Esophagus muscularis mucosa (tissue), 4 donors: ENCODE measurements at regions of chr7 and their contacts with region 1.

Region 1: DNA sequence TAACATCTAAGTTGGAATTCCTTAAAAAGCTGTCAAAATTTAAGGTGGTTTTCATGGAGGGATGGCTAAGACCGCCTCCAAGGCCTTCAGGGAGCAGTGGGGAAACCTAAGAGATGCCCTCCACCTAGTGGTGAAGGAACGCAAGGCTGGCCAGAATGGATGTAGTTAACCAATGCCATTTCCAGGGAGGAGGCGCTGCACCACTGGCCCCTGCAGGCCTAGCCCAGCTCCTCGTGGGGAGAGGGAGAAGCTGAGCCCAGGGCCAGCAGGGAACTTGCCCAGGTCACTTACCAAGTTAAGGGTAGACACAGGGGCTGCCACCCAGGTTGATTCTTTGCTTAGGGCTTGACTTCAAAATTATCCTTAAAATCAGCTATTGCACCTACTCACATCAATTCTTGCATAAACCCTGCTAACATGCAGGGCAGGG is 32.0 kb downstream of the FIGNL1 start:
- DNase-seq: no peak
- H3K4me3 ChIP-seq: no peak overlapping the region
- H3K27ac ChIP-seq: no peak overlapping the region
- H3K4me1 ChIP-seq: no peaks in the 10 kb centered on the region
- H3K27me3 ChIP-seq: no peaks in the 10 kb centered on the region
- CTCF ChIP-seq: peak; percentile 55 to 68 (median 58)
- EP300 ChIP-seq: no peak
- POLR2A ChIP-seq: no peak

Region 2: GRCh38 chr7:50206453-50207250 is 211.4 kb before region 1 on chr7:
- intact Hi-C with region 1: loop called (anchors 10 kb)
- DNase-seq: peak; percentile 83
- H3K4me3 ChIP-seq: no peak overlapping the region
- H3K27ac ChIP-seq: no peak overlapping the region
- H3K4me1 ChIP-seq: no peaks in the 10 kb centered on the region
- H3K27me3 ChIP-seq: peaks cover 0 to 28% (median 0%) of the 10 kb centered on the region in 4 donors
- CTCF ChIP-seq: no peak
- EP300 ChIP-seq: no peak
- POLR2A ChIP-seq: no peak

Region 3: DNA sequence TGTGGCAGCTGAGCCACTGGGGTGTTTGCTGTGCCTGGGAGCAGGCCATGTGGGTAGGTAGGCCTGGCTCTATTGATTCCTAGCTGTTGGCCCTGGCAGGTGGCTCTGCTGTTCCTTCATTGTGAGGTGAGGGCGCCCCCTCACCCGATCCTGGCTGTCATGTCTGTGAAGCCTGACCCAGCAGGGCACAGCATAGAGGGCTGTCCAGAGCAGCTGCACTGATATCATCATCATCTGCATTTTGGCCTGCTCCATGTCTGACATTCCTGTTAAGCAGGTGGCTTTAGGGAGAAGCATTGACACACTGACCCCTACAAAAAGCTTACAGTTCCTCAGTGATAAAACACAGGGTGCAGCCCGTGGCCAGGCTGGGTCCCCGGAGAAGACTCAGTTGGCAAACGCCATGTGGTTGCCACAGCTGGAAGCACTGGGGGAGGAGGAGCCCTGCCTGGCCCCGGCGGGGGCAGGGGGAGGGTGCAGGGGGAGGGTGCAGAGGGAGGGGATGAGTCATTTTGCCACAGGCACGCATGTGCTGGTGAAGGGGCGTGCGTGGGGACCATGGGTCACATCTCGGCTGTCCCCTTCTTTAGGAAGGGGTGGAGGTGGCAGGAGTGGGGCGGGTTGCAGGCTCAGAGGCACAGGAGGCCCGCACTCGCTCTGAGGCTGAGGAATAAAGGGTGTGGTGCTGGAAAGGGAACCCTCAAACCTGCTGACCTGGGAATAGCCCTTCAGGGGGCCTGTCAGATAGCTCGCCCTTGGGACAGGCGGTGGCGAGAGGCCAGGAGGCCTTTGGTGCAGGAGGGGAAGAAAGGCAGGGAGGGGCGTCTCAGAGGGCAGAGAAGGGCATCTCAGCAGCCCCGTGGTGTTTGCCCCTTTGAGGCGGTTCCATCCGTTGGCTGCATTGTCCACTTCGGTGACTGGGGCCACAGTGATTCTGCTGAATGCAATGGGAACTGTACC is 82.0 kb before region 1 on chr7:
- intact Hi-C with region 1: no loop called
- DNase-seq: no peak
- H3K4me3 ChIP-seq: no peak overlapping the region
- H3K27ac ChIP-seq: no peak overlapping the region
- H3K4me1 ChIP-seq: no peaks in the 10 kb centered on the region
- H3K27me3 ChIP-seq: peaks cover 0 to 21% (median 0%) of the 10 kb centered on the region in 4 donors
- CTCF ChIP-seq: no peak
- EP300 ChIP-seq: no peak
- POLR2A ChIP-seq: no peak